ENCODE measurements at regions of chr10 and their contacts with region 1.

Region 1: DNA sequence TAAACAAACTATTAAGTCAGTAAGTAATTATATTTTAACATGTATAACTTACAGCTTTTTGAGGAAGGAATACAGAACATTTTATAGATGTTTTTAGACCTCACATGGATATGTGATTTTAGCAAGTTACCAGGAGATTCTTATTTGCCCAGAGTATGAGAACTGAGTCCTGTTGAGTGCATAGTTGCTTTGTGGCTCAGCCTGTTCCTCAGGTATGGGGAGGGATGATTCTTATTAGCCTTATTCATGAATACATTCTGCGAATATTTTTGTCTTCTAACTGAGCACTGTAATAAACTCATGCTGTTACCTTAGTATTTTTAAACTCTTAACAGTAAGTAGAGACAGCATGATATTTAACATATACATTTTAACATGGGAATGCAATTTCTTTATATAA is 17.9 kb downstream of the BTAF1 start:
- DNase-seq: no peak
- H3K4me3 ChIP-seq: no peak overlapping the region
- H3K27ac ChIP-seq: no peak overlapping the region
- H3K4me1 ChIP-seq: no peaks in the 10 kb centered on the region
- H3K27me3 ChIP-seq: no peaks in the 10 kb centered on the region
- CTCF ChIP-seq: no peak

Region 2: DNA sequence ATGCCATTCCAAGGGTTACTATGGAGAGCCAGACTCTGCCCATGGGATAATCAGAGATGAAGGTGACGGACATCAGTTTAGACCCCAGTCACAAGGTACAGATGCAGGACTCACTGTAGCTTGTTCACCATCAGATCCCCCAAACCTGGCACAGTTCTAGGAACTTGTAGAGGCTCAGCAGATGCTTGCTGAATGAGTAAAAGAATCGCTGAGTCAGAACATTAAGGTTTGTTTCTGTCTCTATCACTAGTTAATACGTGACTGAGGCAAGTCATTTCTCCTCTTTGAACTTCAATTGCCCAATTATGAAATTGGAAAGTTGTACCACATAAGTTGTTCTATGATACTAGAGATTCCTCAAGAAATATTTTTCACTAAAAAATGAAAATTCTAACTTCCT is 373.6 kb before region 1 on chr10:
- CTCF ChIA-PET with region 1: no interaction called
- POLR2A ChIA-PET with region 1: no interaction called
- intact Hi-C with region 1: no loop called
- DNase-seq: no peak
- H3K4me3 ChIP-seq: no peak overlapping the region
- H3K27ac ChIP-seq: no peak overlapping the region
- H3K4me1 ChIP-seq: peaks cover 6% of the 10 kb centered on the region
- H3K27me3 ChIP-seq: no peaks in the 10 kb centered on the region
- CTCF ChIP-seq: no peak

Region 3: DNA sequence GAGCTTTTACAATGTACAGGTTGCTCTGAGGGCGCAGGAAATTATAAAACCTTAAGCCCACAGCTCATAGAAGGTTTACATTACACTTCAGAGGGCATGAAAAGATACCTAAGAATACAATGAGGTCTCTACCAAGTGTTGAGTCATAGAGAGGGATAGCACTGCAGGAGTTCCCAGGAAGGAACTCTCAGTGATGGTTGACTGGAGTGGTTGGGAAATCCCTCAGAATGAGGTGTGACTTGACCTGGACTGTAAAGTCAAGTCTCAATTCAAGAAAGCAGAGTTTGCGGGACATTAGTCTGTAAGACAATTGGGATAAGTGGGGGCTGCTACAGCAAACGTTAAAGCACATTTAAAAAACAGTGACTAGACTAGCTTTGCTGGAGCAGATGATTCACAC is 121.3 kb before region 1 on chr10:
- CTCF ChIA-PET with region 1: interaction called, 12 read pairs
- POLR2A ChIA-PET with region 1: no interaction called
- intact Hi-C with region 1: no loop called
- DNase-seq: no peak
- H3K4me3 ChIP-seq: no peak overlapping the region
- H3K27ac ChIP-seq: no peak overlapping the region
- H3K4me1 ChIP-seq: no peaks in the 10 kb centered on the region
- H3K27me3 ChIP-seq: no peaks in the 10 kb centered on the region
- CTCF ChIP-seq: no peak

Region 4: DNA sequence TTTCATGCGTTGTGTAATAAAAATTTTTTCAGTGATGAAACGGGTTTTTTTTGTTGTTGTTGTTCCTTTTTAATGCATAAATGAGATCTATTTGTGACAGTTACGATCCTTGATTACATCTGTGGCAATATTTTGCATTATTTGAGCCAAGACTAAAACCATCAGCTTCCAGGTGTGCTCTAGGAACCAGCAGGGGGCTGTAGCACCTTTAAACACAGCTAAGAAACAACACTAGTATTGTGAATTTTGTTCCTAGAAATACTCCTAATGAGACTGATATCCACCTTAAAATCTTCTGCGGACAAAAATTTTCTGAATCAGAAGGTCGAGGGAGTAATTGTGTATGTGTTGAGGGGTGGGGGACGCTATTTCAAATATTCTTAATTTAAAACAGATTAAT is 84.8 kb before region 1 on chr10:
- CTCF ChIA-PET with region 1: no interaction called
- POLR2A ChIA-PET with region 1: no interaction called
- intact Hi-C with region 1: no loop called
- DNase-seq: no peak
- H3K4me3 ChIP-seq: no peak overlapping the region
- H3K27ac ChIP-seq: no peak overlapping the region
- H3K4me1 ChIP-seq: no peaks in the 10 kb centered on the region
- H3K27me3 ChIP-seq: no peaks in the 10 kb centered on the region
- CTCF ChIP-seq: no peak

Measured in A673 (cell line).